H1 (cell line): ENCODE measurements at regions of chr1 and their contacts with region 1.

Region 1: GRCh38 chr1:241998412-241998921 is 431 bp downstream of the MAP1LC3C start:
- DNase-seq: peak in 1 of 2 experiments; percentile 85
- H3K4me3 ChIP-seq: peak overlapping the region; percentile 31 to 64 (median 60); a peak in 7 of 8 replicates
- H3K27ac ChIP-seq: no peak overlapping the region
- H3K4me1 ChIP-seq: peaks cover 3 to 7% (median 5%) of the 10 kb centered on the region in 4 experiments; a peak in 5 of 7 replicates
- H3K27me3 ChIP-seq: no peaks in the 10 kb centered on the region
- CTCF ChIP-seq: peak; percentile 83 to 90 (median 84)
- EP300 ChIP-seq: no peak
- POLR2A ChIP-seq: no peak
- RAD21 ChIP-seq: peak; percentile 56 to 61; a peak in 3 of 4 replicates

Region 2: GRCh38 chr1:241902391-241903065 is 95.9 kb before region 1 on chr1:
- CTCF ChIA-PET with region 1: interaction called, 83 read pairs
- POLR2A ChIA-PET with region 1: no interaction called
- DNase-seq: no peak
- H3K4me3 ChIP-seq: no peak overlapping the region
- H3K27ac ChIP-seq: no peak overlapping the region
- H3K4me1 ChIP-seq: no peaks in the 10 kb centered on the region
- H3K27me3 ChIP-seq: no peaks in the 10 kb centered on the region
- CTCF ChIP-seq: no peak
- EP300 ChIP-seq: no peak
- POLR2A ChIP-seq: no peak
- RAD21 ChIP-seq: no peak

Region 3: GRCh38 chr1:241934201-241934848 is 64.1 kb before region 1 on chr1:
- CTCF ChIA-PET with region 1: interaction called, 13 read pairs
- POLR2A ChIA-PET with region 1: no interaction called
- DNase-seq: peak; percentile 13 to 57
- H3K4me3 ChIP-seq: no peak overlapping the region
- H3K27ac ChIP-seq: no peak overlapping the region
- H3K4me1 ChIP-seq: peaks cover 0 to 4% (median under 1%) of the 10 kb centered on the region in 4 experiments; a peak in 2 of 7 replicates
- H3K27me3 ChIP-seq: no peaks in the 10 kb centered on the region
- CTCF ChIP-seq: no peak
- EP300 ChIP-seq: no peak
- POLR2A ChIP-seq: no peak
- RAD21 ChIP-seq: no peak

Region 4: GRCh38 chr1:241979926-241980325 is 18.5 kb before region 1 on chr1:
- CTCF ChIA-PET with region 1: interaction called, 71 read pairs
- POLR2A ChIA-PET with region 1: no interaction called
- DNase-seq: no peak
- H3K4me3 ChIP-seq: no peak overlapping the region
- H3K27ac ChIP-seq: no peak overlapping the region
- H3K4me1 ChIP-seq: no peaks in the 10 kb centered on the region
- H3K27me3 ChIP-seq: no peaks in the 10 kb centered on the region
- CTCF ChIP-seq: no peak
- EP300 ChIP-seq: no peak
- POLR2A ChIP-seq: no peak
- RAD21 ChIP-seq: no peak

Region 5: DNA sequence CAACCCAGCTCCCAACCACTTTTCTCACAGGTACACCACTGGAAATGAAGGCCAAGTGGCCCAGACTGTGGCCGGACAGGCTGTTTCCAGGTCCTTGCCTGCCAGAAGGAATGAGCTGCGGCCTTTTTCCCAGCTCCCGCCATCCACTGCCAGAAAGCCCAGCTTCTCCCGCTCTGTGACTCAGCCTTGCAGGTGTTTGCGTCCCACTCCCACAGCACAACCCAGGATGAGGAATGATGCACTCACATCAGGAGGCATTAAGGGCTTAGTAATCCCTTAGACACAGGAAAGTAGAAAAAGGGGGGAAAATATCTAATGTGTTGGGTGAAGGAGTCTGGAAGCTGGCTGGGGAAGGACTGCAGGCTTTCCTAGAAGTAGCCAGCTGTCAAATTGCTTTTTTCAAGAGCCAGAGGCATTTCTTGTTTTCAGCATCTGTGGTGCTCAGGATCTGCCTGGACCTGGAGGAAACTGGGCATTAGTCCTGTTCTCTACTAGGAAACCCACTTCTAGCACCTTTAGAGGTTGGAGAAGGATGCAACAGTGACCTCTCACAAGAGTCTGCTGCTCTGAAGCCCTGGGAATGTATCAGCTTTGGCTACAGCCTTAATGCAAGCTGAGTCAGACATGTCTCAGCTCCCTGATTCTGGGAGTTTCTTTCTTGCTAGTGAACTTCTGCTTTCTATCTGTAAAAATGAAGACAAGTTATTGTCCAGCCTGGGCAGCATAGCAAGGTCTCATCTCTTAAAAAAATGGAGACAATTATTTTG is 13.6 kb after region 1 on chr1:
- CTCF ChIA-PET with region 1: interaction called, 54 read pairs
- POLR2A ChIA-PET with region 1: no interaction called
- DNase-seq: no peak
- H3K4me3 ChIP-seq: no peak overlapping the region
- H3K27ac ChIP-seq: no peak overlapping the region
- H3K4me1 ChIP-seq: peaks cover 0 to 4% (median under 1%) of the 10 kb centered on the region in 4 experiments; a peak in 2 of 7 replicates
- H3K27me3 ChIP-seq: no peaks in the 10 kb centered on the region; a peak in 1 of 7 replicates
- CTCF ChIP-seq: no peak
- EP300 ChIP-seq: no peak
- POLR2A ChIP-seq: no peak
- RAD21 ChIP-seq: no peak